Natural killer cell (primary cell): ENCODE measurements at regions of chrX and their contacts with region 1.

Region 1: DNA sequence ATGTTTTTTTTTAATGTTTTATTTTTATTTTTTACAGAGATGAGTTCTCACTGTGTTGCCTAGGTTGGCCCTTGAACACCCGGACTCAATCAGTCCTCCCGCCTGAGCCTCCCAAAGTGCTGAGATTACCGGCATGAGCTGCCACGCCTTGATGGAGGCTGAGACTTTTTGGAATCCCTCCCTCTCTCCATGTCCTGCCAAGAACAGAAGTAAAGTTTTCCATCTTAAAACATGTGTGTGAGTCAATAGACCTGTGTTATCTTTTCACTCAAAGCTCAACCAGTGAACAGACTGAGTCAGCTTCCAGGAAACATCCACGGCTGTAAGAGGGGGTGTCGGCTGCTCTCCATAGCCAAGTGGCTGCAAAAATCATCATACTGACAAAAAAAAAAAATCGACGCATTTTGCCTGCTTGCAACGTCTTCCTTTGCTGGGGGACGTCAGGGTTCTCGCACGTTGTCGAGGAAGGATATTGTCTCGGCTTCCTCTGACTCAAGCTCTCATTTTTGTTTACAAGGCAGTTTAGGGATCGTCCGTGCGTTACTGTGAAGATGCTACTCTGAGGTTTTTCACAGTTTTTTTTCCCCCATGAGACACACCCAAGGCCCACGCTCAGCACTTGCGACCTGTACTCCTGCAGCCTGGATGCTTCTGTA is 10.0 kb upstream of the ASMTL start:
- DNase-seq: peak; percentile 58 to 95
- ATAC-seq: peak; percentile 69 to 86 (median 82)
- H3K4me3 ChIP-seq: no peak overlapping the region
- H3K4me3 Mint-ChIP-seq: peak overlapping the region; percentile 92
- H3K27ac ChIP-seq: peak overlapping the region; percentile 83
- H3K27ac Mint-ChIP-seq: peak overlapping the region; percentile 90 to 91
- H3K4me1 ChIP-seq: peaks cover 65% of the 10 kb centered on the region
- H3K4me1 Mint-ChIP-seq: peaks cover 54 to 56% of the 10 kb centered on the region in 2 donors
- H3K27me3 ChIP-seq: no peaks in the 10 kb centered on the region
- H3K27me3 Mint-ChIP-seq: no peaks in the 10 kb centered on the region
- CTCF ChIP-seq: no peak

Region 2: DNA sequence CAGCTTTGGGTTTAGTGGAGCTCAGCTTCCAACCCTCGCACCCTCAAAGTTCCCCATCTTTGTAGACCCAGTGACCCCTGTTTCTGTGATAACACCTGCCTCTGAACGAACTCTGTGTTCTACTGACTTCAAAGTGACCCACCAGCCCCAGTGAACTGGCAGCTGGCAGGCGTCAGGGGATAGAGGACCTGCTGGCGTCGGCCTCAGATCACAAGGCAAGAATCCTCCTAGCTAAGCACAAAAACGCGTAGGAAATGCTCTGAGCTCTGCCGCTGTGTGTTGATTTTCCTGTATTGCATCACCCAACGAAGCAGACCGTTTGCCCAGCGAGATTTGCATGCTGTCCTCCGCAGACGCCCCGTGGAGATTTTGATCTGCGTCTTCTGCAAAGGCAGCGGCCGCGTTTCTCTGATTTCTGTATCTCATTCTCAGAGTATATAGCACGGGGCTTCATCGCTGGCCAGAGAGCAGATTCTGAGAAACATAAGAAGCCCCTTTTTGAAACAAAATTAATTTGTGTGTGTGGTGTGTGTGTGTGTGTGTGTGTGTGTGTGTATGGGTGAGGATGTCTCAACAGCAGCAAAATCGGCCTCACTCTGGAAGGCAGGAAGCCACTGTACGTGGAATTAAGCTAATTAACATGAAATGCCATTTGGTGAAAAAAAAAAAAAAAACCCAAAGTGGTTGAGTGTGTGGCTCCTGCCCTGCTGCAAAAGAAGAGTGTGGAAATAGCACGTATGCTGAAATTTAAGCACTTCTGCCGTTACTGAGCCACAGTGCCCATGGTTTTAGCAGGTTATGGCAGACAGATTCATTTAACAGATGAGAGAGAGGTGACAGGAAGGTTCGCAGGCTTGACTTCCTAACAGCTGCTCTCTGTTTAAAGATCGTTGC is 19.2 kb after region 1 on chrX:
- intact Hi-C with region 1: loop called (anchors 1 kb)
- DNase-seq: peak; percentile 67 to 92
- ATAC-seq: peak; percentile 69 to 85 (median 83)
- H3K4me3 ChIP-seq: peak overlapping the region; percentile 7
- H3K4me3 Mint-ChIP-seq: peak overlapping the region; percentile 92
- H3K27ac ChIP-seq: peak overlapping the region; percentile 95
- H3K27ac Mint-ChIP-seq: peak overlapping the region; percentile 98 to 99
- H3K4me1 ChIP-seq: peaks cover 80% of the 10 kb centered on the region
- H3K4me1 Mint-ChIP-seq: peaks cover 68 to 72% of the 10 kb centered on the region in 2 donors
- H3K27me3 ChIP-seq: no peaks in the 10 kb centered on the region
- H3K27me3 Mint-ChIP-seq: no peaks in the 10 kb centered on the region
- CTCF ChIP-seq: no peak